ENCODE measurements at regions of chr15 and their contacts with region 1.

Region 1: DNA sequence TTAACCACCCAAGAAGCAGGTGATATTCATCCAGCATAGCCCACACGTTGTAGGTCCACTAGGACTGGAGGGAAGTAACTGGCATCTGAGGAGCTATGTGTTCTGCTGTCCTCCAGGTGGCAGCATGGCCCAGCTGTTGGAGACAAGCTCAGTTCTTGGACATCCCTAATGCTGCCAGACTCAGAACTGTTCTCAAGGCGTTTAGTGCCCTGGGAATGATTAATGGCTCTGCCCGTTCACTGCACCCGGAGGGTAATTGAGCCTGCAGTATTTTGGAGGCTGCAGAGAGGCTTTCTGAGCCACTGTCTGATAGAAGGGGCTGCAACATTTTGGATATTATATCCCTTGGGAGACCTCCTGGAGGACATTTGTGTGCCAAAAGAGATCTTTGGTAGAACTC is 521.2 kb upstream of the SEMA6D start:
- H3K4me3 Mint-ChIP-seq: no peak overlapping the region
- H3K27ac Mint-ChIP-seq: no peak overlapping the region
- H3K4me1 Mint-ChIP-seq: no peaks in the 10 kb centered on the region
- H3K27me3 Mint-ChIP-seq: peaks cover 2% of the 10 kb centered on the region

Region 2: DNA sequence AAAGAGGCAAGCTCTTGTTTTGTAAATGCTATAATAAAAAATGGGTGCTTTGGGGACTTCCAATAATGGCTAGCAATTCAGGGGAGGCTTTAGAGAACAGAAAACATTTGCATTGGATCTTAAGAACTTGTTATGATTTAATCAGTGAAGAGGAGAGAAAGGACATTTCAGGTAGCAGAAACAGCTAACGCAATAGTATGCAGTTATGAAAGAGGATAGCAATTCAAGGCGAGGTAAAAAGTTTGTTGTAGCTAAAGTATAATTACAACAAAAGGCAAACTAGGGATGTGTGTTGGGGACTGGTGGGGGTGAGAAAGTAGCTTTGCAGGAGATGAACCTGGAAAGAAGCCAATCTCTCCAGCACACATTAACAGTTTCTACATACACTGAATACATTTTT is 37.5 kb before region 1 on chr15:
- intact Hi-C with region 1: no loop called
- H3K4me3 Mint-ChIP-seq: no peak overlapping the region
- H3K27ac Mint-ChIP-seq: no peak overlapping the region
- H3K4me1 Mint-ChIP-seq: no peaks in the 10 kb centered on the region
- H3K27me3 Mint-ChIP-seq: no peaks in the 10 kb centered on the region

Region 3: GRCh38 chr15:47415539-47415971 is 219.5 kb after region 1 on chr15:
- intact Hi-C with region 1: no loop called
- H3K4me3 Mint-ChIP-seq: no peak overlapping the region
- H3K27ac Mint-ChIP-seq: no peak overlapping the region
- H3K4me1 Mint-ChIP-seq: no peaks in the 10 kb centered on the region
- H3K27me3 Mint-ChIP-seq: no peaks in the 10 kb centered on the region

Region 4: DNA sequence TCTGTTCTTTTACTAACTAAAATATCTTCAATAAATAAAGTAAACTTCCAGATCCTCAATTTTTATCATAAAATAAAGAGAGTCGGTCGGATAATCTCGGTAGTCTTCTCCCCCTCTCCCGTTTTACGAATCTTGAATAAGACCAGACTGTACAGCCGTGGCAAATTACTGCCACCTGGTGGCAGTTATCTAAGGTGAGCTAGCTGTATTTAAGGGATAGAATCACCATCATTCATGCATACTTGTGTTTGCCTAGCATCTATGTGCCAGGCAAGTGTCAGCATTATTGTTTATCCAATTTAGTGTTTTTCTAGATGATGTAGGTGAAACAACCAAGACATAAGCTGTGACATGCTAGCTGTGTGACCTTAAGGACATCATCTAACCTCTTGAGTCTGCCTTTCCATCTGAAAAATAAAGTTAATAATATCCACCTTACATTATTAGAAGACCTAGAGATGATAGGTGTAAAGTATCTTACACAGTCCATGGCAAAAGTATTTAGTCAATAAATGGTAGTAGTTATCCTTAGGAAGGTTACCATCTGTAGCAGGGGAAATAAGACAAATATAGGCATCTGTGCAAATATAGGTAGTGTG is 1156.5 kb after region 1 on chr15:
- intact Hi-C with region 1: loop called (anchors 5 kb)
- H3K4me3 Mint-ChIP-seq: no peak overlapping the region
- H3K27ac Mint-ChIP-seq: no peak overlapping the region
- H3K4me1 Mint-ChIP-seq: peaks cover 12% of the 10 kb centered on the region
- H3K27me3 Mint-ChIP-seq: no peaks in the 10 kb centered on the region